Breast epithelium (tissue), 4 donors: ENCODE measurements at regions of chrX and their contacts with region 1.

Region 1: DNA sequence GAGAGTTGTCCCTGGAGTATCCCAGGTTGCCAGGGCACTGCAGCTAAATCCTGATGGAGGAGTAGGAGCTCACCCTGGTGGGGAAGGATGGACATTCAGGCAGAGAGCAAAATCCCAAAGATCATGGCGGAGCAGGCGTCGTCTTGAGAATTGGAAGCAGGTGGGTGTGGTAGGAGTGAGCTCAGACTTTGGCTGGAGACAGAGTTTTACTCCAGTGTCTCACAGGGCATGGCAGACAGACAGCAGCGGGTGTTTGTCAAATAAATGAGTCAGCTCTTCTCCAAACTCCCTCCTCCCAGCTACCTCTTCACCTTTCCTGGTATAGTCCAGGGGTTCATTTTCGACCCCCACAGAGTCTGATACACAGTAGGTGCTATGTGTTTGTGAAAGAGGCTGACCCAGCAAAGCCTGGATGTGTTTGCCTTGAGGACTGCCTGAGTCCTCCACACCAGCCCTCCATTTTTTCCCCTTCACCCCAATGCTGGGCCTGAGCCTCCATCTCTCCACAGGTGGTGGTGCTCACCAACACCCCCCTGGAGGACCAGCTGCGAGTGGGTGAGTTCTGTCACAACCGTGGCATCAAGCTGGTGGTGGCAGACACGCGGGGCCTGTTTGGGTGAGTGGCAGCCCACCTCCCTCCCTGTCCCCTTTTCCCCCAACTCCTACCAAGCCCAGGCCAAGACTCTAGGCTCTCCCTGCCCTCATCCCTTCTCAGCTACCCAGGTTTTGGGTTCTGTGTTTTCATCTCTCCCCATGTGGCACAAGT is 6.9 kb downstream of the UBA1 start:
- DNase-seq: peak in 1 of 2 donors; percentile 52
- H3K4me3 ChIP-seq: no peak overlapping the region
- H3K27ac ChIP-seq: peak overlapping the region; percentile 61 to 84
- H3K4me1 ChIP-seq: peaks cover 0 to 13% of the 10 kb centered on the region in 2 donors
- H3K27me3 ChIP-seq: no peaks in the 10 kb centered on the region
- CTCF ChIP-seq: no peak
- POLR2A ChIP-seq: no peak

Region 2: DNA sequence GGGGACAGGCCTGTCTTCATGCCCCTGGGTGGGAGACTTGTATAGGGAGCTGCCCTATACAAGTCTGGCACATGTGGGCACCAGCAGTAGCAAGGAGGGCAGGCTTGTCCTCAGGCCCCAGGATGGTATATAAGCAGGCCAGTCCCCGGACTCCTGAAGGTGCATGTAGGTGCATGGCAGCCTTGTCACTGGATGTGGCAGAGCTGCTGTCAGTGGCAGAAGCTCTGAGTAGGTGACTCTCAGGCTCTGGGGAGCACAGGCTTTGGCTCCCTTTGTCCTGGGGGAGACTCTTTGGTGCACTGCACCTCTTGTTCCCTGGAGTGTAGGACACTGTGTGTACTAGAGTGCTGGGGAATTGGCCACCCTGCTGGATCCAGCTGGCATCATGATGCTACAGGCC is 1623.2 kb before region 1 on chrX:
- intact Hi-C with region 1: no loop called
- DNase-seq: no peak
- H3K4me3 ChIP-seq: no peak overlapping the region
- H3K27ac ChIP-seq: no peak overlapping the region
- H3K4me1 ChIP-seq: no peaks in the 10 kb centered on the region
- H3K27me3 ChIP-seq: peaks cover 0 to 20% of the 10 kb centered on the region in 2 donors
- CTCF ChIP-seq: no peak
- POLR2A ChIP-seq: no peak

Region 3: GRCh38 chrX:47361538-47362511 is 161.3 kb after region 1 on chrX:
- intact Hi-C with region 1: loop called (anchors 10 kb)
- DNase-seq: peak in 1 of 2 donors; percentile 73
- H3K4me3 ChIP-seq: peak overlapping the region; percentile 25 to 47 (median 38)
- H3K27ac ChIP-seq: peak overlapping the region; percentile 75 to 76
- H3K4me1 ChIP-seq: no peaks in the 10 kb centered on the region
- H3K27me3 ChIP-seq: no peaks in the 10 kb centered on the region
- CTCF ChIP-seq: no peak
- POLR2A ChIP-seq: no peak